ENCODE measurements at regions of chr6 and their contacts with region 1.

Region 1: GRCh38 chr6:45021676-45022075 is 306.5 kb upstream of the RUNX2 start:
- DNase-seq: peak in 7 of 9 donors; percentile 6 to 55 (median 28)
- ATAC-seq: peak; percentile 67
- H3K4me3 ChIP-seq: no peak overlapping the region
- H3K4me3 Mint-ChIP-seq: peak overlapping the region in 2 of 10 donors; percentile 6 to 7
- H3K27ac ChIP-seq: no peak overlapping the region
- H3K27ac Mint-ChIP-seq: peak overlapping the region in 2 of 9 donors; percentile 23 to 34
- H3K4me1 ChIP-seq: peaks cover 0 to 4% of the 10 kb centered on the region in 2 donors
- H3K4me1 Mint-ChIP-seq: peaks cover 9 to 20% (median 19%) of the 10 kb centered on the region in 7 donors
- H3K27me3 ChIP-seq: no peaks in the 10 kb centered on the region
- H3K27me3 Mint-ChIP-seq: no peaks in the 10 kb centered on the region

Region 2: DNA sequence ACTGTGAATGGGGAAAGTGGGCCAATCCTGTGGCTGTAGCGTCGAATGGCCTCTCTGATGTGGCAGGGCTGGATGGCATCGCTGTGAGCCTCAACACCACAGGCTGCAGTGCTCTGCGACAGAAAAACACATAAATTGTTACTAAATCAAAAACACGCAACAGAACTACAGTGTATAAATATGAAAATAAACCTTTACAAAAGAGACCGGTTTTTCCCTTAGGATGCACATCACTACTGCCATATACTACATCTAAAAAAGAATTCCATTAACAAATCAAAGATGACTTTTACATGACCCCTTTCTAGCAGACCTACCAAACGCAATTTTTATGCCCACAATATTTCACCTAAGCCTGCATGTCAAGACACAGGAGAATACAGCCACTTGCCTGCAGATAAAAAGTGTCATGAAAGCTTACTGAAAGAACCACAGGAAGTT is 89.0 kb before region 1 on chr6:
- CTCF ChIA-PET with region 1: no interaction called
- POLR2A ChIA-PET with region 1: interaction called, 6 read pairs
- intact Hi-C with region 1: loop called in 1 of 2 experiments (anchors 5 kb)
- DNase-seq: peak in 7 of 9 donors; percentile 46 to 66 (median 58)
- ATAC-seq: peak; percentile 91
- H3K4me3 ChIP-seq: peak overlapping the region; percentile 37
- H3K4me3 Mint-ChIP-seq: peak overlapping the region; percentile 78 to 98 (median 88)
- H3K27ac ChIP-seq: peak overlapping the region; percentile 71
- H3K27ac Mint-ChIP-seq: peak overlapping the region; percentile 92 to 99 (median 96)
- H3K4me1 ChIP-seq: peaks cover 17 to 42% of the 10 kb centered on the region in 2 donors
- H3K4me1 Mint-ChIP-seq: peaks cover 26 to 67% (median 60%) of the 10 kb centered on the region in 7 donors
- H3K27me3 ChIP-seq: no peaks in the 10 kb centered on the region
- H3K27me3 Mint-ChIP-seq: no peaks in the 10 kb centered on the region

Measured in naive thymus-derived CD4-positive, alpha-beta T cell (primary cell).